Activated CD4-positive, alpha-beta memory T cell treated with anti-CD3 and anti-CD28 coated beads for 36 hours (primary cell): ENCODE measurements at regions of chr19 and their contacts with region 1.

Region 1: DNA sequence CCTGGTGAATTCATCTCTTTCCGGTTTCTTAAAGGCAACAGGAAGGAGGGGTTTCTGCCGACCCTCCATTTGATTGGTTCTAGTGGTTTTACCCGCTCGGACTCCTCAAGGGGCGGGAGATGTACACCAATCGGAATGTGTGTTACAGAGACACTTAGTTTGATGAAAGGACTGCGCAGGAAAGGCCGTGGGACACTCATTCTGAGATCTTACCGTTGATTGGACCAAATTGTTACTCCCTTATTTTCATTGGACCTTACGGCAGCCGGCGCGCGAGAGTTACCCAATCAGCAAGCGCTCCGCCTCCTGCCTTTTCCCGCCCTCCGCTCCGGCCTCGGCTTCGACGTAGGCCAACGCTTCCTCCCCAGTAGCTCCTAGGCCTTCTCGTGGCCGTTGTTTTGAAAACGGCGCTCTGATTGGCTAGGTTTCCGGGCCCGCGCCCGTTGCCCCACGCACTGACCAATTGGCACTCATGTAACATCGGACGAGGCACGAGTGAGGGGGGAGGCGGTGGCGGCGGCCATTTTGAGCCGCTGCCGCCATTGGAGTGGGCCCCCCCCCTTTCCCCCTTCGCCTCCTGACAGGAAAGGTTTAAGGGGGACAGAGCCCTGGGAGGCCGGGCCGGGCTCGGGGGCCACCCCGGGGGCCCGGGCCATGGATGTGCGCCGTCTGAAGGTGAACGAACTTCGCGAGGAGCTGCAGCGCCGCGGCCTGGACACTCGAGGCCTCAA is at the start of gene HNRNPUL1:
- DNase-seq: peak; percentile 99
- H3K4me3 Mint-ChIP-seq: peak within 1 kb of the TSS; percentile 97
- H3K27ac Mint-ChIP-seq: peak within 1 kb of the TSS; percentile 100
- H3K4me1 Mint-ChIP-seq: peaks cover 46% of the 10 kb centered on the region
- H3K27me3 Mint-ChIP-seq: peaks cover 4% of the 10 kb centered on the region
- total RNA-seq, gene HNRNPUL1: 290 to 295 TPM

Region 2: GRCh38 chr19:39397360-39398296 is 1866.4 kb before region 1 on chr19:
- CTCF ChIA-PET with region 1: no interaction called
- POLR2A ChIA-PET with region 1: no interaction called
- intact Hi-C with region 1: loop called (anchors 5 kb)
- DNase-seq: peak; percentile 96
- H3K4me3 Mint-ChIP-seq: peak overlapping the region; percentile 3
- H3K27ac Mint-ChIP-seq: peak overlapping the region; percentile 85
- H3K4me1 Mint-ChIP-seq: peaks cover 57% of the 10 kb centered on the region
- H3K27me3 Mint-ChIP-seq: no peaks in the 10 kb centered on the region

Region 3: DNA sequence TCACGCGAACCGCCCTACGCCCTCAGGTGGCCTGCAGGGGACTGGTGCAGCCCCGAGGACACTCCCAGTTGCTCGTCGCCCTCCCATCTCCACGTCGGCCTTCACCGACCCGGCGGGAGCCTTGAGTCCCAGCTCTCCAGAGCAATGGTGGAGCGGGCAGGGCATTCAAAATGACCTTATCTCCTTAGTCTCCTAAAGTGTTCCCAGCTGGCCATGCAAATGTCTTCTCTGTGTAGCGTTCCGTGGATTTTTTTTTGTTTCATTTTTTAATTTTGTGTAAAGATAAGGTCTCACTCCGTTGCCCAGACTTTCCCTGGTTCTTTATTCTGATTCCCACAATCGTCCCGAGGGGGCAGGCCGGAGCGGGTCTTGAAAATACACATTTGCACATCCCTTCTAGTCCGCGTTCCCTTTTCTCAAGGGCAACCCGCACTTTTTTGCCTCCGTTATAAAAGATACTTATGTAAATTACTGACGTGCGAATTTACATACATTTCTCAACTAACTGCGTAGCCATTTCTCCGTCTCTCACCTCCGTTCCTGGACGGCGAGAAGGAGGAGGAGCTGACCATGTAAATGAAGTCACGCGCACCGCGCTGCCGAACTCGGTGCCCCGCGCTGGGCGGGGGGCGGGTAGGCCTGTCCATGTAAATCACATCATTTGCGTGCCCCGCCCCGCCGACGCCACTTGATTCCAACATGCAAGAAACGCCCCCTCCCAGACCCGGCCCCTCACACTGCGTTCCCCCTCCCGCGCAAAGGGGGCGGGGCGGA is 465.6 kb before region 1 on chr19:
- CTCF ChIA-PET with region 1: no interaction called
- POLR2A ChIA-PET with region 1: interaction called, 3 read pairs
- intact Hi-C with region 1: loop called (anchors 5 kb)
- DNase-seq: peak; percentile 100
- H3K4me3 Mint-ChIP-seq: peak overlapping the region; percentile 91
- H3K27ac Mint-ChIP-seq: peak overlapping the region; percentile 93
- H3K4me1 Mint-ChIP-seq: peaks cover 49% of the 10 kb centered on the region
- H3K27me3 Mint-ChIP-seq: no peaks in the 10 kb centered on the region

Region 4: DNA sequence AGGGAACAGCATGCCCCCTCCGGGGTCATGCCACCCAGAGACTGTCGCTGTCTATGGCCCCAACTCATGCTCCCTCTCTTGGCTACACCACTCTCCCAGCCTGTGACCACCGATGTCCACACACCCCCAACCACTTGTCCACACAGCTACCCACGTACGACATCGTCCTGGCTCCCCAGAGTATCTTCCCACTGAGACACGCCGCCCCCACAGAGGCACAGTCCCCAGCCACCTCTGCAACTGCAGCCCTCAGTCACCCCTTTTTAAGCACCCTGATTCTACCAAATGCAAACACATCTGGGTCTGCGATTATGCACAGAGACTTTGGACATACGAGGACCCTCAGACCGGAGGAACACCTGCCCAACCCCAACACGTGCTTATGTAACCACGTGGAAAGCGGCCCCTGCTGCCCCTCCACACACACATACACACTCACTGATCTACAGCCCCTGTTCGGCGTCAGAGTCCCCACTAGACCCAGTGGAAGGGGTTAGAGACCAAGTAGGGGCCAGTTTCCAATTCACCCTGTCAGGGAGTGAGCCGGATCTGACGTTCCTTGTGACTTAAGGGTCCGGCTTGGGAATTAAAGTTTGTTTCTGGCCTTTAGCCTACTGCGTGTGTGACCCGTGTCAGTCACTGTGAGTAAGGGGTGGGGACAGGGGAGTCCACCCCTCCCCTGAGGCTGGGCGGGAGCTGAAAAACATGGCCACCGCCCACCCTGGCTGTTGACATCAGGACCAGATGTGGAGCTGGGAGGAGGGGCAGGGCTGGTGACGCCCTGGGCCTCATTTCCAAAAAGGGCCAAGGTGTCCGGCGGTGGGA is 56.9 kb before region 1 on chr19:
- CTCF ChIA-PET with region 1: interaction called, 118 read pairs
- POLR2A ChIA-PET with region 1: interaction called, 4 read pairs
- intact Hi-C with region 1: loop called (anchors 1 kb)
- DNase-seq: no peak
- H3K4me3 Mint-ChIP-seq: no peak overlapping the region
- H3K27ac Mint-ChIP-seq: no peak overlapping the region
- H3K4me1 Mint-ChIP-seq: peaks cover 11% of the 10 kb centered on the region
- H3K27me3 Mint-ChIP-seq: peaks cover 2% of the 10 kb centered on the region

Region 5: DNA sequence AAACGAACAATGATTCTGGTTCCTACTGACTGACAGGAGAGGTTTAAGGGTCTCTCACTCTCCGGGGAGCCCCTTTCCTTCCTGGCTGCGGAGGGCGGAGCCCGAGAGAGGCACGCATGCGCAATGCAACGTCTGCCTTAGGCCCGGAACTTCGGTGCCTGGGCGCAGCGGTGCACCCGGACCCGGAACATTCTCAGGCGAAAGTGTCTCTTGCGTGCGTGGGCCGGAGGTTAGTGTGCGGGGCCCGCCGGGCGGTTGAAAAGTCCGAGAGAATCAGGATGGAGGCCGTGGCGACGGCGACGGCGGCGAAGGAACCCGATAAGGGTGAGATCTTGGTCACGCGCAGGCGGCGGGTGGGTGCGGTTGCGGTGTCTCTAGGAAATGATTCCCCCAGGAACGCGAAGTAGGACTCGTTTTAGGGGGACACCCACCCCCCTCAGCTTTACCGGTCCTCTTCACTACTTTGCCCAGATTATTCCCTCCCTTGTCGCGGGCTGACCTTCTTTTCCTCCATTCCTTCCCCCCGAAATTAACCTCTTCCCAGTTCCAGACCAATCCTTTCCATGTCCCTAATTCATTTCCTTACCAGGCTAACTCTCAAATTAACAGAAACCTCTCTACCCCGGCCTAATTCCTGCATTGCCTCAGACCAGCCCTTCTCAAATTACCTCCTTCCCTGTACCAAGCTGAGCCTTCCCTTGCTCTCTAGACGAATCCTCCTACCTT is 46.2 kb after region 1 on chr19 and contains the start of gene CCDC97:
- CTCF ChIA-PET with region 1: interaction called, 83 read pairs
- POLR2A ChIA-PET with region 1: interaction called, 97 read pairs
- intact Hi-C with region 1: loop called (anchors 1 kb)
- DNase-seq: peak; percentile 92
- H3K4me3 Mint-ChIP-seq: peak within 1 kb of the TSS; percentile 96
- H3K27ac Mint-ChIP-seq: peak within 1 kb of the TSS; percentile 96
- H3K4me1 Mint-ChIP-seq: peaks cover 65% of the 10 kb centered on the region
- H3K27me3 Mint-ChIP-seq: no peaks in the 10 kb centered on the region
- total RNA-seq, gene CCDC97: 20.5 to 23.4 TPM

Region 6: GRCh38 chr19:41363753-41364523 is 99.9 kb after region 1 on chr19 and contains the start of gene B9D2:
- CTCF ChIA-PET with region 1: no interaction called
- POLR2A ChIA-PET with region 1: interaction called, 12 read pairs
- intact Hi-C with region 1: loop called (anchors 1 kb)
- DNase-seq: peak; percentile 99
- H3K4me3 Mint-ChIP-seq: peak within 1 kb of the TSS; percentile 91
- H3K27ac Mint-ChIP-seq: peak within 1 kb of the TSS; percentile 92
- H3K4me1 Mint-ChIP-seq: peaks cover 15% of the 10 kb centered on the region
- H3K27me3 Mint-ChIP-seq: no peaks in the 10 kb centered on the region
- total RNA-seq, gene B9D2: 4.7 to 5.1 TPM